GM12878 (cell line): ENCODE measurements at regions of chr10 and their contacts with region 1.

Region 1: GRCh38 chr10:44932517-44933450 is 21.6 kb downstream of the TMEM72 start:
- DNase-seq: peak; percentile 53
- ATAC-seq: peak; percentile 99
- H3K4me3 ChIP-seq: no peak overlapping the region
- H3K27ac ChIP-seq: peak overlapping the region; percentile 13; the same call in 1 of the 2 replicates
- H3K4me1 ChIP-seq: peaks cover 8% of the 10 kb centered on the region
- H3K27me3 ChIP-seq: no peaks in the 10 kb centered on the region
- CTCF ChIP-seq: peak; percentile 97 to 99 (median 99); a peak in 5 of 6 replicates
- EP300 ChIP-seq: no peak
- POLR2A ChIP-seq: no peak
- RAD21 ChIP-seq: peak; percentile 98

Region 2: GRCh38 chr10:44952779-44953231 is 20.0 kb after region 1 on chr10:
- CTCF ChIA-PET with region 1: interaction called, 58 read pairs
- POLR2A ChIA-PET with region 1: interaction called, 4 read pairs
- RAD21 ChIA-PET with region 1: interaction called, 34 read pairs
- SMC1A ChIA-PET with region 1: interaction called, 65 read pairs
- in situ Hi-C with region 1: no loop called
- intact Hi-C with region 1: no loop called
- DNase-seq: no peak
- ATAC-seq: no peak
- H3K4me3 ChIP-seq: no peak overlapping the region
- H3K27ac ChIP-seq: no peak overlapping the region
- H3K4me1 ChIP-seq: peaks cover 32% of the 10 kb centered on the region
- H3K27me3 ChIP-seq: no peaks in the 10 kb centered on the region
- CTCF ChIP-seq: no peak
- EP300 ChIP-seq: no peak
- POLR2A ChIP-seq: no peak
- RAD21 ChIP-seq: no peak

Region 3: GRCh38 chr10:44965651-44966097 is 32.9 kb after region 1 on chr10:
- CTCF ChIA-PET with region 1: interaction called, 116 read pairs
- POLR2A ChIA-PET with region 1: interaction called, 4 read pairs
- RAD21 ChIA-PET with region 1: interaction called, 38 read pairs
- SMC1A ChIA-PET with region 1: interaction called, 92 read pairs
- in situ Hi-C with region 1: no loop called
- intact Hi-C with region 1: no loop called
- DNase-seq: no peak
- ATAC-seq: peak; percentile 49
- H3K4me3 ChIP-seq: peak overlapping the region; percentile 50
- H3K27ac ChIP-seq: peak overlapping the region; percentile 85
- H3K4me1 ChIP-seq: peaks cover 81% of the 10 kb centered on the region
- H3K27me3 ChIP-seq: no peaks in the 10 kb centered on the region
- CTCF ChIP-seq: 0 out of 6 replicates have a peak, but pooled peaks of 2 of the 3 experiments have one; percentile 7 to 8
- EP300 ChIP-seq: peak in 1 of 2 experiments; percentile 13; a peak in 1 of 4 replicates
- POLR2A ChIP-seq: peak; percentile 37; the same call in 1 of the 2 replicates
- RAD21 ChIP-seq: no peak

Region 4: GRCh38 chr10:44981172-44982113 is 48.7 kb after region 1 on chr10:
- CTCF ChIA-PET with region 1: interaction called, 181 read pairs
- POLR2A ChIA-PET with region 1: interaction called, 12 read pairs
- RAD21 ChIA-PET with region 1: interaction called, 62 read pairs
- SMC1A ChIA-PET with region 1: interaction called, 40 read pairs
- in situ Hi-C with region 1: loop called (anchors 5 kb)
- intact Hi-C with region 1: no loop called
- DNase-seq: no peak
- ATAC-seq: peak; percentile 76
- H3K4me3 ChIP-seq: no peak overlapping the region
- H3K27ac ChIP-seq: peak overlapping the region; percentile 47
- H3K4me1 ChIP-seq: peaks cover 39% of the 10 kb centered on the region
- H3K27me3 ChIP-seq: no peaks in the 10 kb centered on the region
- CTCF ChIP-seq: no peak
- EP300 ChIP-seq: no peak
- POLR2A ChIP-seq: no peak
- RAD21 ChIP-seq: no peak

Region 5: GRCh38 chr10:45008524-45009161 is 75.9 kb after region 1 on chr10:
- CTCF ChIA-PET with region 1: interaction called, 30 read pairs
- POLR2A ChIA-PET with region 1: no interaction called
- RAD21 ChIA-PET with region 1: interaction called, 24 read pairs
- SMC1A ChIA-PET with region 1: interaction called, 48 read pairs
- in situ Hi-C with region 1: no loop called
- intact Hi-C with region 1: loop called (anchors 2 kb)
- DNase-seq: peak; percentile 35
- ATAC-seq: peak; percentile 94
- H3K4me3 ChIP-seq: no peak overlapping the region
- H3K27ac ChIP-seq: no peak overlapping the region
- H3K4me1 ChIP-seq: no peaks in the 10 kb centered on the region
- H3K27me3 ChIP-seq: no peaks in the 10 kb centered on the region
- CTCF ChIP-seq: peak; percentile 65 to 83 (median 80)
- EP300 ChIP-seq: no peak
- POLR2A ChIP-seq: no peak
- RAD21 ChIP-seq: peak; percentile 78

Region 6: GRCh38 chr10:45235798-45236231 is 303.0 kb after region 1 on chr10:
- CTCF ChIA-PET with region 1: interaction called, 7 read pairs
- POLR2A ChIA-PET with region 1: no interaction called
- RAD21 ChIA-PET with region 1: interaction called, 13 read pairs
- SMC1A ChIA-PET with region 1: interaction called, 3 read pairs
- in situ Hi-C with region 1: no loop called
- intact Hi-C with region 1: loop called (anchors 5 kb)
- DNase-seq: no peak
- ATAC-seq: no peak
- H3K4me3 ChIP-seq: no peak overlapping the region
- H3K27ac ChIP-seq: no peak overlapping the region
- H3K4me1 ChIP-seq: no peaks in the 10 kb centered on the region
- H3K27me3 ChIP-seq: no peaks in the 10 kb centered on the region; a peak in 1 of 4 replicates
- CTCF ChIP-seq: no peak
- EP300 ChIP-seq: no peak
- POLR2A ChIP-seq: no peak
- RAD21 ChIP-seq: no peak